Left ventricle myocardium inferior (tissue), 1 donor: ENCODE measurements at regions of chr17 and their contacts with region 1.

Region 1: GRCh38 chr17:59440784-59441441 is 109.5 kb downstream of the YPEL2 start:
- DNase-seq: peak; percentile 86
- H3K4me3 ChIP-seq: peak overlapping the region; percentile 22
- H3K27ac ChIP-seq: peak overlapping the region; percentile 77
- H3K4me1 ChIP-seq: peaks cover 51% of the 10 kb centered on the region
- H3K27me3 ChIP-seq: no peaks in the 10 kb centered on the region
- CTCF ChIP-seq: peak; percentile 88

Region 2: DNA sequence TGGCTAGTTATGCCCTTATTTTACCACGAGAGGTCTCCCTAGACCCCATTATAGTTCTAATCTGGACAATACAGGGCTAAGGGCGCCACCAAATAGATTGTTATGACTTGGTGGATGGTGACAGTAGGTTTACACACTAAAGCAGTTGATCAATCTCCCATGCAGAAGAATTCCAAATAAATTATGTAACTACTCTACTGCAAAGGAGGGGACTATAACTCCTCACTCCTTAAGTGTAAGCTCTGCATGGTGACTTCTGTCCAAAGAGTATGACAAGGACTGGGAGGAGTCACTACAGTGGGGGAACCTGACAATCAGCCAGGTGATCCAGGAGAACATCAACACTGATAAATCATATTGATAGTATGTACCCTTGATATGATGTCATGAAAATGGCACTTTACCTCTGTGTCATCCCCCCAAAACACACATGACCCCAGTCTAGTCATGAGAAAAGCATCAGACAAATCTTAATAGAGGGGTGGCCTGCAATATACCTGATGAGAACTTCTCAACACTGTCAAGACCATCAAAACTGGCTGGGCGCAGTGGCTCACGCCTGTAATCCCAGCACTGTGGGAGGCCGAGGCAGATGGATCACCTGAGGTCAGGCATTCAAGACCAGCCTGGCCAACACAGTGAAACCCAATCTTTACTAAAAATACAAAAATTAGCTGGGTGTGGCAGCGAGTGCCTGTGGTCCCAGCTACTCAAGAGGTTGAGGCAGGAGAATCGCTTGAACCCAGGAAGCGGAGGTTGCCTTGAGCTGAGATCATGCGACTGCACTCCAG is 129.6 kb before region 1 on chr17:
- intact Hi-C with region 1: loop called (anchors 5 kb)
- DNase-seq: no peak
- H3K4me3 ChIP-seq: no peak overlapping the region
- H3K27ac ChIP-seq: no peak overlapping the region
- H3K4me1 ChIP-seq: no peaks in the 10 kb centered on the region
- H3K27me3 ChIP-seq: no peaks in the 10 kb centered on the region
- CTCF ChIP-seq: peak; percentile 92

Region 3: GRCh38 chr17:59547131-59547915 is 106.4 kb after region 1 on chr17:
- intact Hi-C with region 1: no loop called
- DNase-seq: no peak
- H3K4me3 ChIP-seq: no peak overlapping the region
- H3K27ac ChIP-seq: no peak overlapping the region
- H3K4me1 ChIP-seq: no peaks in the 10 kb centered on the region
- H3K27me3 ChIP-seq: no peaks in the 10 kb centered on the region
- CTCF ChIP-seq: no peak

Region 4: GRCh38 chr17:59941131-59941530 is 500.2 kb after region 1 on chr17:
- intact Hi-C with region 1: no loop called
- DNase-seq: no peak
- H3K4me3 ChIP-seq: no peak overlapping the region
- H3K27ac ChIP-seq: no peak overlapping the region
- H3K4me1 ChIP-seq: no peaks in the 10 kb centered on the region
- H3K27me3 ChIP-seq: no peaks in the 10 kb centered on the region
- CTCF ChIP-seq: no peak